ENCODE measurements at regions of chr20 and their contacts with region 1.

Region 1: DNA sequence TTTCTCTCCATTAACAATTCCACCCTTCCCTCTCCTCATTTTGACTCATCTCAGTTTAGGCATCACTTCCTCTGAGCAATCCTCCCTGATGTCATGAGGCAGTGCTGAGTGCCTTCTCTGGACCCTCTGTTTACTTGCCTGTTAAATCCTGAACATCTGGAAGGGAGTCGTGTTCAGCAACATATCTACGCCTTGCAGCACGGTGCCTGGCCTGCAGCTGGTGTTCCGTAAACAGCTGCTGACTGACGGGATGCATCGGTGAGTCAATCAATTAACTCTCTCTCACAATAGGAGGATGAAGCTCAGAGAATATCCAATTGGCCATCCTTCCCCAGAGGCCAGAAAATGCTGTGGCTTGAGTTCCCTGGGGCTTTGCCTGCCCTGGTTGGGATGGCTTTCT is 613.5 kb downstream of the PTPRT start:
- DNase-seq: no peak
- ATAC-seq: no peak
- H3K4me3 ChIP-seq: no peak overlapping the region
- H3K4me3 Mint-ChIP-seq: no peak overlapping the region
- H3K27ac ChIP-seq: no peak overlapping the region
- H3K27ac Mint-ChIP-seq: no peak overlapping the region
- H3K4me1 ChIP-seq: no peaks in the 10 kb centered on the region
- H3K4me1 Mint-ChIP-seq: no peaks in the 10 kb centered on the region
- H3K27me3 ChIP-seq: peaks cover 0 to 3% of the 10 kb centered on the region in 2 experiments
- H3K27me3 Mint-ChIP-seq: no peaks in the 10 kb centered on the region

Region 2: DNA sequence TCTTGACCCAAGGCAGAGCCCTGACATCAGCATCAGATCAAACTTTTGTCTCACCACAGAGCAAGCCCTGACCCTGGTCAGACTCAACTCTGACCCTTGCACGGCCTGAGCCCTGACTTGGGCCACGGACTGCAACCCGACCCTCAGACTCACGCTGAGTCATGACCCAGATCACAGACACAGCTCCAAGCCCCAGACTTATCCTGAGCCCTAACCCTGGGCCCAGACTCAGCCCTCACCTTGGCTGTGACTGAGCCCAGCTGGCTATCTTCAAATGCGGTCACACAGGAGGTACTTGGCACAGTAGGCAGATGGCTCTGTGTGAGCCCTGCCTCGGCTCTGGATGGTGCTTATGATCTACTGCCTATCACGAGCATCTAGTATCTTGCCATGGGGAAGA is 11.2 kb after region 1 on chr20:
- CTCF ChIA-PET with region 1: no interaction called
- POLR2A ChIA-PET with region 1: interaction called in 1 of 2 experiments, 12 read pairs
- DNase-seq: no peak
- ATAC-seq: no peak
- H3K4me3 ChIP-seq: no peak overlapping the region
- H3K4me3 Mint-ChIP-seq: no peak overlapping the region
- H3K27ac ChIP-seq: no peak overlapping the region
- H3K27ac Mint-ChIP-seq: no peak overlapping the region
- H3K4me1 ChIP-seq: no peaks in the 10 kb centered on the region
- H3K4me1 Mint-ChIP-seq: no peaks in the 10 kb centered on the region
- H3K27me3 ChIP-seq: no peaks in the 10 kb centered on the region
- H3K27me3 Mint-ChIP-seq: no peaks in the 10 kb centered on the region

Region 3: GRCh38 chr20:42873258-42873657 is 297.1 kb after region 1 on chr20:
- CTCF ChIA-PET with region 1: no interaction called
- POLR2A ChIA-PET with region 1: no interaction called
- DNase-seq: no peak
- ATAC-seq: no peak
- H3K4me3 ChIP-seq: no peak overlapping the region
- H3K4me3 Mint-ChIP-seq: no peak overlapping the region
- H3K27ac ChIP-seq: no peak overlapping the region
- H3K27ac Mint-ChIP-seq: no peak overlapping the region
- H3K4me1 ChIP-seq: no peaks in the 10 kb centered on the region
- H3K4me1 Mint-ChIP-seq: no peaks in the 10 kb centered on the region
- H3K27me3 ChIP-seq: no peaks in the 10 kb centered on the region
- H3K27me3 Mint-ChIP-seq: peaks cover 0 to 3% of the 10 kb centered on the region in 2 donors